WTC11 (cell line): ENCODE measurements at regions of chr17 and their contacts with region 1.

Region 1: DNA sequence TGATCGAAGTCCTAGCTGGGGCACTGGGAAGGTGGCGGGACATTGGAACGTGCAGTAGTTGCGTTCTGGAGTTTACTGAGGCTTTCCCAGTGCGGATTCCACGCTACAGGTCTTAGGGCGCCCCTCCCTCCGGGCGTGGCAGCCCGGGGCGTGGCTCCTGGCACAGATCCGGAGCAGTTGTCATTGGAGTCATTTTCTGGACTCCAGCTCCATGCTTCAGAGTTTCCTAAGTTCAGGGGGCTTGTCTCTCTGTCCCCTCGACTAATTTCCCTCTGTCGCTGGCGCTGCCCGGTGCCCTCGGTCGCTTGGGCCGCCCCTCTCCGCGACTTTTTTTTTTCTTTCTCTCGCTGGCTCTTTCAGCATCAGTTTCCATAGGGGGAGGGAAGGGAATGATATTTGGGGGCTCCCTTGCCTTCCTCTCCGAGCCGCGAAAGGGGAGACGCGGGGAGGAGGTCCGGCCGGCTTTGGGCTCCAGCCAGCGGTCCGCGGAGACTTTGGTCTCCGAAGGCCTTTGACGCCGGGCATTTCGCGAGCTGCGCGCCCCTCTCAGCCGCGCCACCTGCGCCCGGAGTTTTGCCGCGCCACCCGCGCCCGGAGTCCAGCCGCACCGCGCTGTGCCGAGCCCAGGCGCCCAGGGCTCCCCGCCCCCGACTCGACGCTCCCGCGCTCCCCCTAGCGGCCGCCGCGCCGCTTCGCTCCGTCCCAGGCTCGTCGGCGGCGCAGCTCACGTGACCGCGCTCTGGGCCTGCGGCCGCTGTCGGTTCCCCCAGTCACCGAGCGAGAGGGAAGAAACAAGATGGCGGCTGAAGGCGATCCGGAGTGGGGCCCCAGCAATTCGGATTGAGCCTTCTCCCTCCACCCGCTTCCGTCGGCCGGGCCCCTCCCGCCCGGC is at the start of gene BPTF:
- DNase-seq: peak; percentile 91
- ATAC-seq: peak; percentile 88
- H3K4me3 Mint-ChIP-seq: peak within 1 kb of the TSS; percentile 98
- H3K27ac Mint-ChIP-seq: peak within 1 kb of the TSS; percentile 99
- H3K4me1 Mint-ChIP-seq: peaks cover 29% of the 10 kb centered on the region
- H3K27me3 Mint-ChIP-seq: no peaks in the 10 kb centered on the region; the same call in 1 of the 2 replicates
- CTCF ChIP-seq: peak; percentile 94
- total RNA-seq, gene BPTF: 177 to 181 TPM (median 178 TPM) in 3 replicates

Region 2: DNA sequence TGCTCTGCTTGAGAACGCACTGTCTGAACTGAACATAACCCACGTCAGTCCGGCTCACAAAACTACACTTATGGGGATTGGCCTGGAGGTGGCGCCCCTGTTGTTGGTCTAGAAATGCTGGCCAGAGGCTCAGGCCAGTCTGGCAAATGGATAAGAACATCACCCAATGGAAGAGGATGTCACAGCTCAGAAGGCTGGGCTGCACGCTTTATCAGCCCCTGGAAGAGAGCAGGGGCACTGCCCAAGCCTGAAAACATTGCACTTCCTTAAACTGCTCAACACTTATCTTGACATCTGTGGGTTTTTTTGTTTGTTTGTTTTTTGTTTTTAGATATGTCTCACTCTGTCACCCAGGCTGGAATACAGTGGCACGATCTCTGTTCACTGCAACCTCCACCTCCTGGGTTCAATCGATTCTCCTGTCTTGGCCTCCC is 24.5 kb before region 1 on chr17:
- CTCF ChIA-PET with region 1: interaction called, 25 read pairs
- POLR2A ChIA-PET with region 1: no interaction called
- DNase-seq: peak; percentile 79
- ATAC-seq: peak; percentile 96
- H3K4me3 Mint-ChIP-seq: no peak overlapping the region
- H3K27ac Mint-ChIP-seq: no peak overlapping the region
- H3K4me1 Mint-ChIP-seq: peaks cover 10% of the 10 kb centered on the region
- H3K27me3 Mint-ChIP-seq: no peaks in the 10 kb centered on the region
- CTCF ChIP-seq: peak; percentile 34; the same call in 1 of the 2 replicates

Region 3: DNA sequence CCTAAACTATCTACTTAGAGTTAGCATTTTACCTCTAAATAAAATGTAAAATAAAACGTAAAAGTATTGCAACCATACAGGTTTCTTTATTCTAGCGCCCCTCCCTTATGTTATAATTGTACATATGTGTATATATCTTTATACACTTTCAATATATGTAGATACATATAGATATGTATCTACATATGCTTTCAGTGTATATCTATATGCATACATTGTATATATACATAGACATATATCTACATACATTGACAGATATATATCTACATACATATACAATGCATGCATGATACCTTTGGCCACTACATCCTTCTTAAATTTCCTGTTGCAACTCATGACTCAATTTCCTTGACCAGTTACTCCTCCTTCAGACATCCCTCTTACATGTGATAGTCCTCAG is 17.0 kb after region 1 on chr17:
- CTCF ChIA-PET with region 1: no interaction called
- POLR2A ChIA-PET with region 1: no interaction called
- DNase-seq: no peak
- ATAC-seq: no peak
- H3K4me3 Mint-ChIP-seq: no peak overlapping the region
- H3K27ac Mint-ChIP-seq: peak overlapping the region; percentile 3; the same call in 1 of the 2 replicates
- H3K4me1 Mint-ChIP-seq: peaks cover 27% of the 10 kb centered on the region
- H3K27me3 Mint-ChIP-seq: no peaks in the 10 kb centered on the region
- CTCF ChIP-seq: no peak

Region 4: GRCh38 chr17:67879662-67880061 is 54.7 kb after region 1 on chr17:
- CTCF ChIA-PET with region 1: no interaction called
- POLR2A ChIA-PET with region 1: no interaction called
- DNase-seq: no peak
- ATAC-seq: peak; percentile 78
- H3K4me3 Mint-ChIP-seq: no peak overlapping the region
- H3K27ac Mint-ChIP-seq: peak overlapping the region; percentile 86
- H3K4me1 Mint-ChIP-seq: peaks cover 20% of the 10 kb centered on the region
- H3K27me3 Mint-ChIP-seq: no peaks in the 10 kb centered on the region
- CTCF ChIP-seq: no peak

Region 5: GRCh38 chr17:67902511-67903231 is 77.7 kb after region 1 on chr17:
- CTCF ChIA-PET with region 1: no interaction called
- POLR2A ChIA-PET with region 1: no interaction called
- DNase-seq: no peak
- ATAC-seq: no peak
- H3K4me3 Mint-ChIP-seq: no peak overlapping the region
- H3K27ac Mint-ChIP-seq: peak overlapping the region; percentile 29; the same call in 1 of the 2 replicates
- H3K4me1 Mint-ChIP-seq: no peaks in the 10 kb centered on the region
- H3K27me3 Mint-ChIP-seq: no peaks in the 10 kb centered on the region
- CTCF ChIP-seq: no peak